ENCODE measurements at regions of chr18 and their contacts with region 1.

Region 1: GRCh38 chr18:54269893-54270844 is 852 bp downstream of the POLI start:
- DNase-seq: peak; percentile 25 to 65
- H3K4me3 ChIP-seq: peak overlapping the region; percentile 85
- H3K27ac ChIP-seq: peak overlapping the region; percentile 87
- H3K4me1 ChIP-seq: peaks cover 15% of the 10 kb centered on the region; the same call in 1 of the 2 replicates
- H3K27me3 ChIP-seq: no peaks in the 10 kb centered on the region
- CTCF ChIP-seq: peak; percentile 71

Region 2: DNA sequence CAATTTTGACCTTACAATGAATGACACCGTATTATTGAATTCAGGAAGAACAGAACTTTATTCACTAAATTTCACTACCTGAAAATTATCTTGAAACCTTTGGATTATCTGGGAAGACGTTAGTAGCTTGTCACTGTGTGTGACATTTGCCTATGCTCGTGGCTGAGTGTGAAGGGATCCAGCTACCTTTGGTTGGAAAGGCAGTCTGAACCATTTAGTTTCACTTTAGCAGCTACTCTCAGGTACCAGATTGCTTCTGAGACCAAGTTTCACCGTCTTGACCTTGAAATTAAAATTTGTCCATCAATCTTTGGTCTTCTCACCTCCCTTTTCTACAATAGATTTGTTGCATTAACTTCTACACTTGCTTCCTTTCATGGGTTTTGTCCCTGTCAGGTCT is 683.2 kb before region 1 on chr18:
- CTCF ChIA-PET with region 1: no interaction called
- POLR2A ChIA-PET with region 1: interaction called, 21 read pairs
- intact Hi-C with region 1: no loop called
- DNase-seq: no peak
- H3K4me3 ChIP-seq: no peak overlapping the region
- H3K27ac ChIP-seq: no peak overlapping the region
- H3K4me1 ChIP-seq: no peaks in the 10 kb centered on the region
- H3K27me3 ChIP-seq: no peaks in the 10 kb centered on the region
- CTCF ChIP-seq: no peak

Region 3: DNA sequence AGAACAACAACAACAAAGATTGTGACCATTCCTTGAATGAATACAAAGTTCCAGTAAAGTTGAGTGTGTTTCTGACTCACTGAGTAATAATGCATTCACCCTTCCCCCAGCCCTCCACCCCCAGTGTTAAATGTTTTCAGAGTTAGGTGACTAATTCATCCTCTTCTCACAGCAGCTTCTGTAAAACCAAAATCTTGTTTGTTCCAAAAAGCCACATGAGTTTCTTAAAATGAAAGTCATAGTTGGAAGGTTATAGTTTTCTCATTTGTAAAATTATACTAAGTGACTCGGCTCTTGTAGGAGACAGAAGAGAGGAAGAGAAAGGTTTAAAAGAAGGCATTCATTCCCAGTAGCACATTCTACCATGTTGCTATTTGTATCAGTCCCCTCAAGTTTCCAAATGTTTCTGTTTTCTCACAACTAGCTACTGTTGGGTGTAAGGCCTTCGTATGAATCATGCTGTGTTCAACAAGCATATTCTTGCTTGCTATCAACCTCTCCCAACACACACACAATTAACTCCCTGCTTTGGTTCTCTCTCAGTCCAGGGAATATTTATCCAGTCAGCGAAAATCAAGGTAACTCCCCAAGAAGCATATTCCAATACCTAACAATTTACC is 121.0 kb before region 1 on chr18:
- CTCF ChIA-PET with region 1: no interaction called
- POLR2A ChIA-PET with region 1: no interaction called
- intact Hi-C with region 1: loop called (anchors 10 kb)
- DNase-seq: peak; percentile 47 to 91
- H3K4me3 ChIP-seq: peak overlapping the region; percentile 36; the same call in 1 of the 2 replicates
- H3K27ac ChIP-seq: peak overlapping the region; percentile 89
- H3K4me1 ChIP-seq: peaks cover 32% of the 10 kb centered on the region
- H3K27me3 ChIP-seq: no peaks in the 10 kb centered on the region
- CTCF ChIP-seq: no peak

Region 4: GRCh38 chr18:54173980-54174630 is 96.1 kb before region 1 on chr18:
- CTCF ChIA-PET with region 1: no interaction called
- POLR2A ChIA-PET with region 1: no interaction called
- intact Hi-C with region 1: no loop called
- DNase-seq: no peak
- H3K4me3 ChIP-seq: no peak overlapping the region
- H3K27ac ChIP-seq: no peak overlapping the region
- H3K4me1 ChIP-seq: no peaks in the 10 kb centered on the region
- H3K27me3 ChIP-seq: no peaks in the 10 kb centered on the region
- CTCF ChIP-seq: no peak

Region 5: GRCh38 chr18:54224379-54225014 is 45.7 kb before region 1 on chr18 and contains the start of gene MBD2:
- CTCF ChIA-PET with region 1: interaction called, 6 read pairs
- POLR2A ChIA-PET with region 1: interaction called, 4 read pairs
- intact Hi-C with region 1: loop called (anchors 1 kb)
- DNase-seq: peak; percentile 83 to 89
- H3K4me3 ChIP-seq: peak within 1 kb of the TSS; percentile 56
- H3K27ac ChIP-seq: peak within 1 kb of the TSS; percentile 87
- H3K4me1 ChIP-seq: peaks cover 32% of the 10 kb centered on the region
- H3K27me3 ChIP-seq: no peaks in the 10 kb centered on the region
- CTCF ChIP-seq: no peak
- total RNA-seq, gene MBD2: 72.0 and 80.9 TPM in 2 replicates

Region 6: DNA sequence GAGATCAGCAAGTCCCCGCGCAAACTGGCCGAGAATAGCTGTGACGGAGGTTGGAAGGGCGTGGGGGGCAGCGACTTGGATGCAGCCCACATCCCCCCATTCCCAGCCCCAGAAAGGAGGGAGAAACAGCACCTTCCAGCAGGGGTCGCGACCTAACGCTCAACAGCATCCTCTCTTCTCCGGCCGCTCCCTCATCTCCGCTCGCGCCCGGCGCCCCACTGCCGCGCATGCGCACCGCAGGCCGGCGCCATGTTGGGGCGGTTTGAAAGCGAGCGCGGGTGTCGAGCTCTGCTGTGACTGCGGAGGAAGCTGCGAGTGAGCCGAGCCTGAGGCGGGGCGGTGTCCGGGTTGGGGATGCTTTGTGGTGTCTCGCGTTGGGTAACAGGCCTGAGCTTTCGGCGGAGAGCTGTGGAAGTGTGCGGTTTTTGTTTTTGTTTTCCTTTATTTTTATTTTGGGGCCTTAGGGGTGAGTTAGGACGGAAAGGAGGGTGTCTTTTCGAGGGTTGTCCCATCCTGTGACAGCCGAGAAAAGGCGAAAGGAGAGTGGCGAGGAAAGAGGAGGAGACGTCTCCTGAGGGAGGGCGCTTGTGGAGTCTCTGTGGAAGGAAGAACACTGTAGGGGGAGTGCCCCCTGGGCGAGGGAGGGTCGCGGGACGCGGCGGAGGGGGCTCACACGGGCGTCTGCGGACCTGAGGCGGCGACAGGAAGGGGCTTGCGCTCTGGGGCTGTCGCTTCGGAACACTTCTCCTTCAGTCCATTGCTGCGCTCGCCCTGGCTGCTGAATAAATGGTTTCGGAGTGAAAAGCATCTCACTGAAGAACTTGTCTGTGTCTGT is 87.7 kb after region 1 on chr18 and contains the starts of genes C18orf54 and STARD6:
- CTCF ChIA-PET with region 1: no interaction called
- POLR2A ChIA-PET with region 1: no interaction called
- intact Hi-C with region 1: loop called (anchors 10 kb)
- DNase-seq: peak; percentile 76 to 78
- H3K4me3 ChIP-seq: peak within 1 kb of the TSS; percentile 93
- H3K27ac ChIP-seq: peak within 1 kb of the TSS; percentile 18; the same call in 1 of the 2 replicates
- H3K4me1 ChIP-seq: peaks cover 13% of the 10 kb centered on the region
- H3K27me3 ChIP-seq: no peaks in the 10 kb centered on the region
- CTCF ChIP-seq: peak; percentile 53; the same call in 1 of the 2 replicates
- total RNA-seq, gene C18orf54: 6.7 and 7.6 TPM in 2 replicates
- total RNA-seq, gene STARD6: not detected in 2 replicates

Measured in PC-9 (cell line).